WTC11 (cell line): ENCODE measurements at regions of chr2 and their contacts with region 1.

Region 1: GRCh38 chr2:238523158-238524110 is 96.7 kb downstream of the ASB1 start:
- DNase-seq: peak; percentile 71
- ATAC-seq: peak; percentile 97
- H3K4me3 Mint-ChIP-seq: no peak overlapping the region
- H3K27ac Mint-ChIP-seq: no peak overlapping the region
- H3K4me1 Mint-ChIP-seq: peaks cover 9% of the 10 kb centered on the region
- H3K27me3 Mint-ChIP-seq: no peaks in the 10 kb centered on the region; the same call in 1 of the 2 replicates
- CTCF ChIP-seq: no peak

Region 2: DNA sequence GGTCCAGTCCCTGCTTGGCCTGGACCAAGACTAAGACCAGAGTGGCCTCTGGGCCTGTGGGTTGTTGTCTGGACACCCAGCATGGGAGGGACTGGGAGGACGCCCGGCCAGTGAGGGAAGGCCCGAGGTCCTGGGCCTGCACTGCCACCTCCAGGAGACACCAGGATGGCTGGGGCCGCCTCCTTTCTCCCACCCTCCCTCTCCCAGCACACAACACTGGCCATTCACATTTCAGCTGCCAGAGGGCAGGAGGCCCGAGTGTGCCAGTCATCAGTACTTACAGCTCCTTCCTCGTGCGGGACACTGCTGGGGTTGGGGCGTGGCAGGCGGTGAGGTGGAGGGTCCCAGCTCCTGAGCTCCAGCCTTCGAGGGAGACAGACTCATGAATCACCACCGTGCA is 36.8 kb after region 1 on chr2:
- CTCF ChIA-PET with region 1: interaction called, 10 read pairs
- POLR2A ChIA-PET with region 1: no interaction called
- DNase-seq: peak; percentile 56
- ATAC-seq: peak; percentile 84
- H3K4me3 Mint-ChIP-seq: no peak overlapping the region
- H3K27ac Mint-ChIP-seq: no peak overlapping the region
- H3K4me1 Mint-ChIP-seq: no peaks in the 10 kb centered on the region
- H3K27me3 Mint-ChIP-seq: no peaks in the 10 kb centered on the region; the same call in 1 of the 2 replicates
- CTCF ChIP-seq: no peak

Region 3: GRCh38 chr2:238573065-238573778 is 49.8 kb after region 1 on chr2:
- CTCF ChIA-PET with region 1: interaction called, 11 read pairs
- POLR2A ChIA-PET with region 1: no interaction called
- DNase-seq: peak; percentile 66
- ATAC-seq: peak; percentile 89
- H3K4me3 Mint-ChIP-seq: no peak overlapping the region
- H3K27ac Mint-ChIP-seq: no peak overlapping the region
- H3K4me1 Mint-ChIP-seq: no peaks in the 10 kb centered on the region
- H3K27me3 Mint-ChIP-seq: no peaks in the 10 kb centered on the region
- CTCF ChIP-seq: peak; percentile 93